PC-9 (cell line): ENCODE measurements at regions of chr7 and their contacts with region 1.

Region 1: DNA sequence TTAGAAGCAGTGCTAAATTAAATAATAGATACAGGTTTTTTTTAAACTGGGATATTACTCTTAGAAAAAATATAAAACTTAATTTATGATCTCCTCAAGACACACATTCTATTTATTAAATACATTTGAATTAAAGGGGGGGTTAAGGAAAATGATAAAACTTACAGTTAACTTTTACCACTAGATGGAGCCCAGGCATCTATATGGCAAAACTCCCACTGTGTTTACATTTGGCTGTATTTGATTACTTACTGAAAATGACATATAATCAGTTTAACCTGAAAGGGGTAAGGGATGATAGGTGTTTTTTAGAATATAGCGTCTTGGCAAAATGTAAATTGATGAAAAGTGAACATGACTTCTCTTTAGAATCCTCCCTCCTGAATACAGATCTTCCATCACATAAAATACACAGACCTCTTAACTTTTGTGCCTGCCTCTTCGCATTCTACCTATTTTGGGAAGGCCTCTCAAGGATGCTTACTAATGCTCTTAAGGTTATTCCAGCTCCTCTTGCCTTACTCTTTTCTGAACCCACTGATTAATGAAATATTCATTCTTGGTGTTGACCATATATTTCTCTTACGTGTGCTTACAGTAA is 235.7 kb downstream of the AGMO start:
- DNase-seq: no peak
- H3K4me3 ChIP-seq: no peak overlapping the region
- H3K27ac ChIP-seq: no peak overlapping the region
- H3K4me1 ChIP-seq: no peaks in the 10 kb centered on the region
- H3K27me3 ChIP-seq: no peaks in the 10 kb centered on the region
- CTCF ChIP-seq: peak; percentile 77

Region 2: GRCh38 chr7:15087771-15088170 is 238.4 kb before region 1 on chr7:
- CTCF ChIA-PET with region 1: no interaction called
- POLR2A ChIA-PET with region 1: no interaction called
- intact Hi-C with region 1: no loop called
- DNase-seq: no peak
- H3K4me3 ChIP-seq: no peak overlapping the region
- H3K27ac ChIP-seq: no peak overlapping the region
- H3K4me1 ChIP-seq: no peaks in the 10 kb centered on the region
- H3K27me3 ChIP-seq: no peaks in the 10 kb centered on the region
- CTCF ChIP-seq: no peak

Region 3: DNA sequence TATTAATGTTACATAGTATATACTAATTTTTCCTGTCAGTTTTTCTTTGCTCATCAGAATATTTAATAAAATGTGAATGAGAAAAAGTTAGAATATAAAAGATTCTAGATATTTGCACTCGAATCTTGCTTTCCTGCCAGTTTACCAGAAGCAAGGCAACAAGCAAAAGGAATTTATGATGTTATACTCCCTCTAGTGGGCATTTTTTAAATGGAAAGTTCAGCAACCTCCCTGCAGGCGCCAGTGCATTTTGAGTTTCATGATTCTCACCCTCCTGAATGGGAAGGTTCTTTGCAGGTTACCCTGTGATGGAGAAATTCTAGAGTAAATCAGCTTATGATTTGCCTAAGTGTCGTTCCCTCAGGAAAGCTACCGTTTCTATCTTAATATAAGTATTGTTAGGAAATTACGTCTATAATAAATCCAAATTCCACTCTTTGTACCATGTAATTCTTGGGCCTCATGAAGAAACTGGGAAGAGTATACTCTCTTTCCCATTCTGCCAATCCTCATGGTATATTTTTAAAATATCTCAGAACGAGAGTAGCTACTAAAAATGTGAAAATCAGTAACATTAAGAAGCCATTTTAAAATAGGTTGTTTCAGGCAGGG is 745.2 kb after region 1 on chr7:
- CTCF ChIA-PET with region 1: interaction called, 3 read pairs
- POLR2A ChIA-PET with region 1: no interaction called
- intact Hi-C with region 1: loop called (anchors 2 kb)
- DNase-seq: peak; percentile 16 to 57
- H3K4me3 ChIP-seq: no peak overlapping the region
- H3K27ac ChIP-seq: no peak overlapping the region
- H3K4me1 ChIP-seq: no peaks in the 10 kb centered on the region
- H3K27me3 ChIP-seq: no peaks in the 10 kb centered on the region
- CTCF ChIP-seq: peak; percentile 95